ENCODE measurements at regions of chr4 and their contacts with region 1.

Region 1: DNA sequence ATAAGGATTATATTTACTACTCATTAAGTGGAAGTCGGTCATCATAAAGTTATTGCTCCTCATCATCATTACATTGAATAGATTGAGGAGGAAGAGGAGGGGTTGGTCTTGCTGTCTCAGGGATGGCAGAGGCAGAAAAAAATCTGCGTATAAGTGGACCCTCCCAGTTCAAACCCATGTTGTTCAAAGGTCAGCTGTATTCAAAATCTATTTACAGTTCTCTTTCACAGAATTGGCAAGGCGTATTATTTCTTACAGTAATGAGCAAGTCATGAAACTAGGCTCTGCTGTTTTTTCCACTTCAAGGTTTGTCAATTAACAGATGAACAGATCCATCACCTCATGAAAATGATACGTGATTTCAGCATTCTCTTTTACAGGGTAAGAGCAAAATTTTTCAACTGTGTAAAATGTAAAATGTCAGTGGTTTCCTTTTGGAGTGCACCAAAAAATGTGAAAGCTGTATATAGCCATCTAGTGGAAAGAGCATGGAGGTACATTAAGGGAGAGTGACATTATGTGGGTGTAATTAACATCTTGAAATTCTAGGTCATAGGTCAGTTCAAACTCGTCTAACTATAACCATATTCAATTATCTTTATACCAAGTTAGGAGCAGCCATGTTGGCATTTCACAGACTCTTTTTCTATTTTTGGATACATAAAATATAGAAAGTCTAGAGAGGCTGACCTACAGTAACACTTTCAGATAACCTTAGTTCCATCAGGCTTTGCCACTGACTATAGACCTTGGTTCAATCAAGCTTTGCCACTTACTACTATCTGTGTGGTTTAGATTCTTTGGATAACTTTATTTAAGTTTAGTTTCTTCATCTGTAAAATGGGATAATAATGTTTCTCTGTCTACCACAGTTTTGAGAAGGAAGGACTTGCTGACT is 30.1 kb downstream of the NEIL3 start:
- DNase-seq: peak; percentile 4
- ATAC-seq: peak; percentile 92
- H3K4me3 ChIP-seq: no peak overlapping the region
- H3K27ac ChIP-seq: no peak overlapping the region
- H3K4me1 ChIP-seq: no peaks in the 10 kb centered on the region
- H3K27me3 ChIP-seq: no peaks in the 10 kb centered on the region
- CTCF ChIP-seq: peak; percentile 57 to 61 (median 61); a peak in 5 of 6 replicates
- EP300 ChIP-seq: no peak
- POLR2A ChIP-seq: no peak
- RAD21 ChIP-seq: peak; percentile 81

Region 2: GRCh38 chr4:176357359-176358082 is 982.2 kb before region 1 on chr4:
- CTCF ChIA-PET with region 1: no interaction called
- POLR2A ChIA-PET with region 1: no interaction called
- RAD21 ChIA-PET with region 1: no interaction called
- SMC1A ChIA-PET with region 1: no interaction called
- in situ Hi-C with region 1: loop called (anchors 25 kb)
- intact Hi-C with region 1: no loop called
- DNase-seq: peak; percentile 48
- ATAC-seq: peak; percentile 94
- H3K4me3 ChIP-seq: no peak overlapping the region
- H3K27ac ChIP-seq: peak overlapping the region; percentile 2; the same call in 1 of the 2 replicates
- H3K4me1 ChIP-seq: peaks cover 13% of the 10 kb centered on the region
- H3K27me3 ChIP-seq: no peaks in the 10 kb centered on the region
- CTCF ChIP-seq: no peak
- EP300 ChIP-seq: no peak
- POLR2A ChIP-seq: no peak
- RAD21 ChIP-seq: no peak

Region 3: DNA sequence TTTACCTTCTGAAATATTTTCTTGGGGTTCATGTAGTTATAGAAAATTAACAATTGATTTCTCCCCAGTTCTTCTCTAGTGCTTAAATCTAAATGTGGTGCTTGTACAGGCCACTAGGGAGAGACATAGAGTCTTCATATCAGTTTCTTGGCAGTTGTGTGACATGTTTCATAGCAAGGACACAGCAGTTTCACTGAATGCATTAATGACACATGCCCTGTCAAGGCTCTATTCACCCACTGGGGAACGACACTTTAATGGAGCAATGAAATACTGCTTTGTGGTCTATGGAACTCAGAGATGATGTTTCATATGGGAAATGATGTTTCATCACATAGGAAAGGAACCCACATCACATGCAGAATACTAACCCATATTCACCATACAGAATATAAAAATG is 549.8 kb before region 1 on chr4:
- CTCF ChIA-PET with region 1: no interaction called
- POLR2A ChIA-PET with region 1: no interaction called
- RAD21 ChIA-PET with region 1: no interaction called
- SMC1A ChIA-PET with region 1: no interaction called
- in situ Hi-C with region 1: no loop called
- intact Hi-C with region 1: loop called (anchors 10 kb)
- DNase-seq: no peak
- ATAC-seq: peak; percentile 83
- H3K4me3 ChIP-seq: no peak overlapping the region
- H3K27ac ChIP-seq: no peak overlapping the region
- H3K4me1 ChIP-seq: no peaks in the 10 kb centered on the region
- H3K27me3 ChIP-seq: peaks cover 3 to 13% of the 10 kb centered on the region in 2 experiments; a peak in 3 of 4 replicates
- CTCF ChIP-seq: peak; percentile 56 to 65 (median 63)
- EP300 ChIP-seq: no peak
- POLR2A ChIP-seq: no peak
- RAD21 ChIP-seq: peak; percentile 57

Region 4: DNA sequence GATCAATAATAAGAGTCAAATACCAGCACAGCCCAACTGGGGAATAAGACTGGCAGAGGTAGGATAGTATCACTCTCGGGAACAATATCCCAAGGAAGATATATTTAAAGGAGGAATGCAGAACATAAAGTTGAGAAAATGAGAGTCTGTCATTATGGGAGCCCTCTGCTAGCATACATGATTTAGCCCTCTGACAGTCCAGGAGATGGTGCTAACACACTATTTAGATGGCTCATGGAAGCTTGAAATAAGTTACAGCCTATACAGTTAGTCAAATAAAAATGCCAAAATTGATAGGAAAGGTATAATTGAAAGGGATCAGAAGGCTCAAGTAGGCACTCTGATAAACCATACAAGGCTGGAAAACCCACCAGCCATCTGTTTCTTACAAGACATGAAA is 231.0 kb before region 1 on chr4:
- CTCF ChIA-PET with region 1: no interaction called
- POLR2A ChIA-PET with region 1: no interaction called
- RAD21 ChIA-PET with region 1: no interaction called
- SMC1A ChIA-PET with region 1: no interaction called
- in situ Hi-C with region 1: no loop called
- intact Hi-C with region 1: loop called (anchors 5 kb)
- DNase-seq: no peak
- ATAC-seq: no peak
- H3K4me3 ChIP-seq: no peak overlapping the region
- H3K27ac ChIP-seq: no peak overlapping the region
- H3K4me1 ChIP-seq: no peaks in the 10 kb centered on the region
- H3K27me3 ChIP-seq: no peaks in the 10 kb centered on the region
- CTCF ChIP-seq: no peak
- EP300 ChIP-seq: no peak
- POLR2A ChIP-seq: no peak
- RAD21 ChIP-seq: no peak

Region 5: GRCh38 chr4:177309522-177310371 is 30.0 kb before region 1 on chr4 and contains the start of gene NEIL3:
- CTCF ChIA-PET with region 1: interaction called, 19 read pairs
- POLR2A ChIA-PET with region 1: no interaction called
- RAD21 ChIA-PET with region 1: interaction called, 3 read pairs
- SMC1A ChIA-PET with region 1: interaction called, 7 read pairs
- in situ Hi-C with region 1: no loop called
- intact Hi-C with region 1: no loop called
- DNase-seq: peak; percentile 54
- ATAC-seq: peak; percentile 95
- H3K4me3 ChIP-seq: peak within 1 kb of the TSS; percentile 82
- H3K27ac ChIP-seq: peak within 1 kb of the TSS; percentile 58
- H3K4me1 ChIP-seq: no peaks in the 10 kb centered on the region
- H3K27me3 ChIP-seq: no peaks in the 10 kb centered on the region
- CTCF ChIP-seq: no peak
- EP300 ChIP-seq: no peak
- POLR2A ChIP-seq: peak; percentile 90
- RAD21 ChIP-seq: no peak
- polyA plus RNA-seq, gene NEIL3: 3.0 to 3.4 TPM